ENCODE measurements at regions of chr12 and their contacts with region 1.

Region 1: GRCh38 chr12:91074154-91074709 is 16.4 kb upstream of the KERA start:
- DNase-seq: no peak
- ATAC-seq: no peak
- H3K4me3 ChIP-seq: no peak overlapping the region
- H3K27ac ChIP-seq: 0 out of 2 replicates have a peak overlapping the region, but pooled peaks have one; percentile 3
- H3K4me1 ChIP-seq: peaks cover 27% of the 10 kb centered on the region
- H3K27me3 ChIP-seq: no peaks in the 10 kb centered on the region
- CTCF ChIP-seq: no peak

Region 2: GRCh38 chr12:91009319-91009950 is 64.8 kb before region 1 on chr12:
- CTCF ChIA-PET with region 1: no interaction called
- POLR2A ChIA-PET with region 1: interaction called, 15 read pairs
- intact Hi-C with region 1: no loop called
- DNase-seq: peak; percentile 47
- ATAC-seq: peak; percentile 65
- H3K4me3 ChIP-seq: no peak overlapping the region
- H3K27ac ChIP-seq: no peak overlapping the region
- H3K4me1 ChIP-seq: peaks cover 9% of the 10 kb centered on the region
- H3K27me3 ChIP-seq: no peaks in the 10 kb centered on the region
- CTCF ChIP-seq: no peak

Region 3: DNA sequence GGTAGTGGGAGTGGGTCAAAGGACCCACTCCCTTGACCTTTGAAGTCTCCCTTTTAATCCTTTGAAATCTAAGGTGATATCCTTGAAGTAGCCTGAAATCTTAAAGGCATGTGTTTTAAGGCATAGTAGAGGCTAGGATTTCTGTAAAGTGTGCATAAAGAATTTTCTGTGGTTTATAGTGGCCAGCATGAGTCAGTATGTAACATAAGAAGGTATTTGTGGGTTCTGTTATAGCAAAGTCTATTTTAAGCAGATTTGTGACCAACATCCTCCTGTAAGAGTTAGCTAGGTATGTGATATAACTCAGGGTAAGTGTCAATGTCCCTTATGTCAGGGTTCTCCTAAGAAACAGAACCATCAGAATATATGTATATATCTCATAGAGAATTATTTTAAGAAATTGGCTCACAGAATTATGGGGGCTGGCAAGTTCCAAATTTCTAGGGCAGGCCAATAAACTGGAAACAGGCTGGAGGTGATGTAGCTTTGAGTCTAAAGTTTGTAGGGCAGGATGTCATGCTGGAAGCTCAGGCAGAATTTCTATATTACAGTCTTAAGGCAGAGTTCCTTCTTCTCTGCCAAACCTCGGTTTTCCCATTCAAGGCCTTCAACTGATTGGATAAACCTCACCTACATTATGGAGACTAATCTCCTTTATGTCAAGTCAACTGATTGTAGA is 50.8 kb before region 1 on chr12:
- CTCF ChIA-PET with region 1: no interaction called
- POLR2A ChIA-PET with region 1: no interaction called
- intact Hi-C with region 1: loop called (anchors 5 kb)
- DNase-seq: peak; percentile 81
- ATAC-seq: peak; percentile 98
- H3K4me3 ChIP-seq: no peak overlapping the region
- H3K27ac ChIP-seq: peak overlapping the region; percentile 26
- H3K4me1 ChIP-seq: peaks cover 19% of the 10 kb centered on the region
- H3K27me3 ChIP-seq: no peaks in the 10 kb centered on the region
- CTCF ChIP-seq: no peak

Region 4: DNA sequence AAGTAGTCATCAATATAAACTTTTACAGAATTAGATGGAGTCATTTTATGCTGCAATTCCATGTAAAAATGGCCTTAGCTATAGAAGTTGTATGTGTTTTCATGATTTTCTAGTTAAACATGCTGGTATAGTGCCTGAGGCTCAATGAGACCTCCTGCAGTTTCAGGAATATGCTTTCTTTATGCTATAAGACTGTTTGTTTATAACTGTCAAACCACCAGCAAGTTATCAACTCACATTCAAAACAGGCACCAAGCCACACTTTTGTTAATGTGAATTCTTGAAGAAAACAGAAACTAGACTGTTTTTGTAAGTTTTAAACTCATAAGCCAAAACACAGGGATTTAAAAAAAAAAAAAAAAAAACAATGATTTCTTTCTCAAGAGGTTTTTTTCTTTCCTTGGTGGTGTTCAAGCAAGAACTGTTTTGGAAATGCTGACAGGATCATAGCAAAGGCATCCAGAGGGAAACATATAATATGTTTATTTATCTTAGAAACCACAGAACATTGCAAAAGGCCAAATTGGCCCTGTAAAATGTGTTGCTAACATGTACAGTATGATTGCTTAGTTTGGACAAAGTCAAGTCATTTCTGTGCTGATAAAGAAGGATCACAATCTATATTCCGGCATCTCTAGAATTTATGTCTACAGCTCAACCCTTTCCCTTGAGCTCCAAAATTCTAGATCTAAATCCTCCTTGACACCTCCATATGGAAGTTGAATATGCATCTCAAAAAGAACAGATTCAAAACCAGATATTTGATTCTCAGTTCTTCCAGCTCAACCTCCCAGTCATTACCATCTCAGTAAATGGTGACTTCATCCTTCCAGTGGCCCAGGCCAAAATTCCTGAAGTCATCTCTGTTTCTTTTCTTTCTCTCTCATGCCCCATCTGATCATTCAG is 66.0 kb after region 1 on chr12:
- CTCF ChIA-PET with region 1: no interaction called
- POLR2A ChIA-PET with region 1: no interaction called
- intact Hi-C with region 1: no loop called
- DNase-seq: peak; percentile 58
- ATAC-seq: peak; percentile 72
- H3K4me3 ChIP-seq: no peak overlapping the region
- H3K27ac ChIP-seq: no peak overlapping the region
- H3K4me1 ChIP-seq: peaks cover 20% of the 10 kb centered on the region
- H3K27me3 ChIP-seq: no peaks in the 10 kb centered on the region
- CTCF ChIP-seq: no peak

Measured in PC-3 (cell line).